ENCODE measurements at regions of chr2 and their contacts with region 1.

Region 1: DNA sequence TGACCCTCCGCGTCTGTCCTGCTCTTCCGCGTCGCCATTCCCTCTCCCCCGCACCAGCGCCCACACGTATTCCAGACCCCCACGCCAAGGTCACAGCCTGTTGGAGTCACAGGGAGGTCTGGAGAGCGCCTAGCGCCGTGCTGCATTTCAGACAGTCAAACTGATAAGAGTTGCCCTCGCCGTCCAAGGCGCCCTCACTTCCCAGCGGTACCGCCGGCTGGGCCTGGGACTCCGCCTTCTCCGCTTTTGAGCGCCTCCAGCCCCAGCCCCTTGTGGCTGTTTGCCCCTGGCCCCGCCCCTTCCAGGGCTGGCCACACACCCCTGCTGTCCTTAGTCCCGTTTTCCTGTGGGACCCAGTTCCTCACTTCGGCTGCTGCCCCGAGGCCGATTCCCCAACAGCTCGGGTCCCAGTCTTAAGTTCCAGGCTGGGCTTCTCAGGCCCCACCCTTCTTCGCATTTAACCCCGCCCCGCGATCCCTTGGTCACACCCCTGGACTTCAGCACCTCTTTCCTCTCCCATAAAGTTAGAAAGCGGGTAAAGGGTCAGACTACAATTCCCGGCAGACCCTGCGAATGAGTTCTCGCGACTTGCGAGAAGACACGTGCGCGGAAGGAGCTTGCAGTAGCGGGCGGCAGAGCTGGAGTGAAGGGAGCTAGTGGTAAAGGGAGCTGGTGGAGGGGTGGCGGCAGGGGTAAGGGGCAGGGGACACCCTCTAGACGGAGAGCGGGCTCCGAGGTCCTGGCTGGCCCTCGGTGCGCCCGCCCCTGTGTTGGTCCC is at the start of gene GMPPA:
- DNase-seq: peak; percentile 95
- ATAC-seq: peak; percentile 91
- total RNA-seq, gene GMPPA: 22.9 TPM

Region 2: GRCh38 chr2:219335373-219335786 is 163.1 kb before region 1 on chr2:
- intact Hi-C with region 1: no loop called
- DNase-seq: no peak
- ATAC-seq: no peak

Region 3: DNA sequence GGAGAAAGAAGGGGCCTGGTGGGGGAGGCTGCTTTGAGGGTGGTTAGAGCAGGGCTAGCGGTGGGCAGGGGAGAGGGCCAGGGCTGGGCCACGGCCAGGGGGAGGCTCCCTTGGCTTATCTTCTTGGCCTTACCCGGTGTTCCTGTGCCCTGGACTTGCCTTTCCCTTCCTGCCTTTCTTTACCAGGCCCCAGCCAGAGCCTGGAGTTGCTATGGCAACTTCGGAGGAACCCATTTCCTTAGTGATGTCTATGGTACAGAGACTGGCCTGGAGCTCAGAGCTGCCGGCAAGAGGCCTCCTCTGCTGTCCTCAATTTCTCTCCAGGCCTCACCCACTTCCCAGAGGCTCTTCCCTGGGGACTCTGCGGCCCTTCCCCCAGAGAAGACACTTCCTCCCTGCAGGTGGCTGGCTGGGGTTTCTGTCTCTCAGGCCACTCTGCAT is 52.4 kb before region 1 on chr2:
- intact Hi-C with region 1: no loop called
- DNase-seq: no peak
- ATAC-seq: peak; percentile 65

Region 4: GRCh38 chr2:219530048-219530963 is 31.8 kb after region 1 on chr2:
- intact Hi-C with region 1: loop called (anchors 2 kb)
- DNase-seq: peak; percentile 93
- ATAC-seq: peak; percentile 85

Region 5: GRCh38 chr2:219597552-219598307 is 99.3 kb after region 1 on chr2 and contains the start of gene STK11IP:
- intact Hi-C with region 1: loop called (anchors 1 kb)
- DNase-seq: peak; percentile 98
- ATAC-seq: peak; percentile 97
- total RNA-seq, gene STK11IP: 13.9 TPM

Region 6: DNA sequence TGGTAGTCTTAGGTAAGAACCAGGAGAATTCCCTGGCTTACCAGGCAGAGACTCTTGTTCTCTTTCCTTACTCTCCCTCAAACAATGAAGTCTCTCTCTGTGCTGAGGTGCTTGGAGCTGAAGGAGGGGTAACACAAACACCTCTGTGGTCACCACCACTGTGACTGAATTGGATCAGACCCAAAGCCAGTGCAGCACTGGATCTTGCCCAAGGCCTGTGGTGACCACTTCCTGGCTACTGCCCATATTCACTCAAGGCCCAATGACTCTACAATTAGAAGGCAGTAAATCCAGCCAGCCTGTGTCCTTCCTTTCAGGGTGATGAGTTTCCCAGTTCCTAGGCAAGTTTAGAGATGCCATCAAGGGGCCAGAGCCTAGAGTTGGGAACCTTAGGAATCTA is 835.7 kb after region 1 on chr2:
- intact Hi-C with region 1: no loop called
- DNase-seq: no peak
- ATAC-seq: no peak